ENCODE measurements at regions of chr1 and their contacts with region 1.

Region 1: GRCh38 chr1:42941640-42942330 is 16.9 kb downstream of the SLC2A1 start:
- DNase-seq: peak; percentile 70 to 78 (median 77)
- H3K4me3 ChIP-seq: no peak overlapping the region
- H3K4me3 Mint-ChIP-seq: no peak overlapping the region
- H3K27ac ChIP-seq: peak overlapping the region in 1 of 2 donors; percentile 62
- H3K27ac Mint-ChIP-seq: peak overlapping the region; percentile 25 to 84 (median 74)
- H3K4me1 ChIP-seq: peaks cover 78 to 82% of the 10 kb centered on the region in 2 donors
- H3K4me1 Mint-ChIP-seq: peaks cover 85% of the 10 kb centered on the region
- H3K27me3 ChIP-seq: no peaks in the 10 kb centered on the region
- H3K27me3 Mint-ChIP-seq: peaks cover 0 to 9% (median 5%) of the 10 kb centered on the region in 3 donors
- CTCF ChIP-seq: no peak

Region 2: DNA sequence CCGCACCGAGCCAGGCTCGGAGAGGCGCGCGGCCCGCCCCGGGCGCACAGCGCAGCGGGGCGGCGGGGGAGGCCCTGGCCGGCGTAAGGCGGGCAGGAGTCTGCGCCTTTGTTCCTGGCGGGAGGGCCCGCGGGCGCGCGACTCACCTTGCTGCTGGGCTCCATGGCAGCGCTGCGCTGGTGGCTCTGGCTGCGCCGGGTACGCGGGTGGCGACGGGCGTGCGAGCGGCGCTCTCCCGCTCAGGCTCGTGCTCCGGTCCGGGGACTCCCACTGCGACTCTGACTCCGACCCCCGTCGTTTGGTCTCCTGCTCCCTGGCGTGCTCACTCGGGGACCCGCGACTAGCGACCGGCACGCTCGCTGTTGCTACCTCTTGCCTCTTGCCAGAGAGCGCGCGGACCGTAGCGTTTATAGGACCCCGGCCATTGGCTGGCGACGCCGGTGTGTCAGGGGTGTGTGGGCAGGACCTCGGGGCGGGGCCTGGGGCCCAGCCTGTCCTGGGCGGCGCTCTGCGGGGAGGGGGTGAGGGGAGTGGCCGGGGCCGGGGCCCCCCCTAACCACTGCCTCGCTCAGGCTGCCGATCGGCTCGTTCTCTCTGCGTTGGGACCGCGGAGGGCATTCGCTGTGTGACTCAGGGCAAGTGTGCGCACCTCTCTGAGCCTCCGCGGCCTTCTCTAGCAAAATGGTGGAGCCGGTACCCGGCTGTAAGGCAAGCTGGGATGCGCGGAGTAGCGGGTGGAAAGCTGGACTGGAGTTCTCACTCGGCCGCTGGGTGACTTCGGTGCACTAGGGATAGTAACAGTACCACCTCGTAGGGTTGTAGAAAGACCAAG is 16.9 kb after region 1 on chr1 and contains the start of gene SLC2A1:
- intact Hi-C with region 1: loop called in 1 of 2 experiments (anchors 2 kb)
- DNase-seq: peak; percentile 75 to 82 (median 77)
- H3K4me3 ChIP-seq: peak within 1 kb of the TSS; percentile 51 to 80 (median 53)
- H3K4me3 Mint-ChIP-seq: peak within 1 kb of the TSS; percentile 96
- H3K27ac ChIP-seq: peak within 1 kb of the TSS in 1 of 2 donors; percentile 41
- H3K27ac Mint-ChIP-seq: peak within 1 kb of the TSS in 4 of 7 donors; percentile 37 to 82 (median 76)
- H3K4me1 ChIP-seq: peaks cover 19 to 33% of the 10 kb centered on the region in 2 donors
- H3K4me1 Mint-ChIP-seq: peaks cover 29% of the 10 kb centered on the region
- H3K27me3 ChIP-seq: peaks cover 21 to 63% of the 10 kb centered on the region in 2 donors
- H3K27me3 Mint-ChIP-seq: peaks cover 62 to 68% (median 65%) of the 10 kb centered on the region in 3 donors
- CTCF ChIP-seq: no peak
- polyA plus RNA-seq, gene SLC2A1: 0.56 to 5.0 (median 0.71) TPM

Region 3: DNA sequence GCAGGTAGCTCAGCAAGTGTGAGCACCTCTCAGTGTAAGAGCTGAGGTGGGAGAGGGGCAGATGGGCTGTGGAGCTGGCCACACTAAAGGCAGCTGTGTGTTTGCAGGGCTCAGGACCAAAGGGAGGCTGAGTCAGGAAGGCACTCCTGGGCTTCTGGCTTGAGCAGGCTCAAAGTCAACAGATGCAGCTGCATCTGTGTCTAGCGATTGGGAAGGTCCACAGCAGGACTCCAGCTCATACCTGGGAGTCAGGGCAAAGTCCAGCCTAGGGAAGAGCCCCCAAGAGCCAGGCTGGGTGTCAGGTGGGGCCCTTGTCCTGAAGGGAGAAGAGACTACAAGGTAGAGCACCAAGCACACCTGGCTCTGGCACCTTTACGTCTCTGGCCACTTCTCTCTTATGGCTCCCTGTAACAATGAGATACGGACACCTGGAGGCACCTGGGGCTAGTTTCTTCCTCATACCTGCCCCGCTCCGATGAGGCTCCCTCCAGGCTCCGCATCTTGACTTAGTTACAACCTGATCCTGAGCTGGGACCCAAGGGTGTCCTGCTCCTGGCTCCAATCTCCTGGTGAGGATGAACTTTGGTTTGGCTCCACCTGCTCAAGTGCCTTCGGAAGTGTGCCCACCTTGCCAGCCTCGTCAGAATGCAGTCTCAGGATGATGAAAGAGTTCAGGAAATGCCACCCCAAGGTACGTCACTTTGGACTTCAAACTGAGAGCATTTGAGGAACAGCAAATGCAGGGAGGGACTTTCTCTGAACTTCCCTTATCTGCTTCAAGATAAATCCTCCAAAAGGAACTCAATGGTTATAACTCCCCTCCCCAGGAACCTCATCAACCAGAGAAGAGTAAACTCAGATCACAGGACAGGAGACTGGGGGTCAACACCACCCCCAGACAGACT is 38.4 kb after region 1 on chr1:
- intact Hi-C with region 1: loop called in 1 of 2 experiments (anchors 5 kb)
- DNase-seq: peak; percentile 68 to 90 (median 71)
- H3K4me3 ChIP-seq: no peak overlapping the region
- H3K4me3 Mint-ChIP-seq: peak overlapping the region in 1 of 2 donors; percentile 56
- H3K27ac ChIP-seq: no peak overlapping the region
- H3K27ac Mint-ChIP-seq: peak overlapping the region; percentile 63 to 88 (median 78)
- H3K4me1 ChIP-seq: peaks cover 11 to 15% of the 10 kb centered on the region in 2 donors
- H3K4me1 Mint-ChIP-seq: peaks cover 18% of the 10 kb centered on the region
- H3K27me3 ChIP-seq: no peaks in the 10 kb centered on the region
- H3K27me3 Mint-ChIP-seq: peaks cover 0 to 3% (median under 1%) of the 10 kb centered on the region in 3 donors
- CTCF ChIP-seq: no peak